ENCODE measurements at regions of chr5 and their contacts with region 1.

Region 1: DNA sequence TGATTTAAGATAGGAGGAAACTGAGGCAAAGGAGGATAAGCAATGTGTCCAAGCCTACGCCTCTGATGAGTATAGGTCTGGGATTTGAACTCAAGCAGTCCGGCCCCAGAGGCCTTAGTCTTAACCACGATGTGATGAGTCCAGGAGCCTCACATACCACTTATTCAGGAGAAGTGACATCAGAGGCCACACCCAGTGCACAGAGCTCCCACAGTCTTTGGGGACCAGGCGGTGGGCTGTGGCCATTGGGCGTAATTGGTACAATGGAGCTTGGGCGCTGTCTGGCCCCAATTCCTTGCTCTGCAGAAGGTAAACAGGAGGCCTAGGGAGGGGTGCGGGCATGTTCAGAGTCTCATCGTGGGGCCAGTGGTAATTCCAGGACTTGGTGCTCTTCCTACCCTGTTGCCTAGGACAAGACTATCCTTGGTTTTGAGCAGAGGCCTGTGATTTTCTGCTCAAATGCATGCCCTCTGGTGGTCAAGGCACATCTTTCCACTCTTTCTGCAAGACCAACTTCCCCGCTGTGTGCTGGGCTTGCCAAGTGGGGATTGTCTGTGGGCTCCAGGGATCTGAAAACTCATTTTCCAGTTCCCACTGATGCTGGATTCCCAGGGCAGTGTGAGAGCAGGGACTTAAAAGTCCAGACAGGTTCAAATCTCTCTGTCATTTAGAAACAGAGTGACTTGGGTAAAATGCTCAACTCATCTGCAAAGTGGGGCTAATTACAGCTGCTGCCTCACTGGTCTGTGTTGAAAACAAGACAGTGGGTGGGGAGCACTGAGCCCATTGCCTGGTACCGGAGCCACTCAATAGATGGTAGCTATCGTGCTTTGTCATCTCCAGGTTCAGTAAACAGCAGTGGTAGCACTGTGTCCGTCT is 15.8 kb downstream of the NDST1 start:
- DNase-seq: peak; percentile 69
- H3K4me3 ChIP-seq: no peak overlapping the region
- H3K27ac ChIP-seq: no peak overlapping the region
- H3K4me1 ChIP-seq: no peaks in the 10 kb centered on the region
- H3K27me3 ChIP-seq: no peaks in the 10 kb centered on the region
- CTCF ChIP-seq: peak; percentile 67 to 80
- POLR2A ChIP-seq: no peak

Region 2: DNA sequence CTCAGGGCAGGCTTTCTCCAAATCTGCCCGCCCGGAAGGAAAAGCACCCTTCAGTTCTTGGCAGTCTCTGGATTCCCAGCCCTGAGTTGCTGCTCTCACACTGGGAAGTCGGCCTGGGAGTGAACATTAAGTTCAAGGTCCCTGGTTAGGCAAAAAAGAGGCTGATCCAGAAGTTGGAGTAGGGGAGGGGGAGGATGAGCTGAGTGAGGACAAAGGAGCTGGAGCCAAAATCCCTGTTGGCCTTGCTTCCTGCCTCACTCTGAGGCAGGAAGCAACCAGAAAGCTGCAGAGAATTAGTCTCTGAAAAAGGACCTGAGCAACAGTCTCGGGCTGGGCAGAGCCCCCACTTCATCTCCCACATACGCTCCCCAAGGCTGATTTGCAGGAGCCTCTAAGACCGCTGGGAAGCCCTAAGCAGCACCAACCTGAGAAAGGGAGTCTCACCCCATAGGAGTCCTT is 59.1 kb before region 1 on chr5:
- CTCF ChIA-PET with region 1: interaction called, 78 read pairs
- POLR2A ChIA-PET with region 1: no interaction called
- dilution Hi-C with region 1: no loop called
- intact Hi-C with region 1: loop called (anchors 1 kb)
- DNase-seq: peak; percentile 28
- H3K4me3 ChIP-seq: no peak overlapping the region
- H3K27ac ChIP-seq: no peak overlapping the region
- H3K4me1 ChIP-seq: peaks cover 21% of the 10 kb centered on the region
- H3K27me3 ChIP-seq: no peaks in the 10 kb centered on the region
- CTCF ChIP-seq: no peak
- POLR2A ChIP-seq: no peak

Region 3: DNA sequence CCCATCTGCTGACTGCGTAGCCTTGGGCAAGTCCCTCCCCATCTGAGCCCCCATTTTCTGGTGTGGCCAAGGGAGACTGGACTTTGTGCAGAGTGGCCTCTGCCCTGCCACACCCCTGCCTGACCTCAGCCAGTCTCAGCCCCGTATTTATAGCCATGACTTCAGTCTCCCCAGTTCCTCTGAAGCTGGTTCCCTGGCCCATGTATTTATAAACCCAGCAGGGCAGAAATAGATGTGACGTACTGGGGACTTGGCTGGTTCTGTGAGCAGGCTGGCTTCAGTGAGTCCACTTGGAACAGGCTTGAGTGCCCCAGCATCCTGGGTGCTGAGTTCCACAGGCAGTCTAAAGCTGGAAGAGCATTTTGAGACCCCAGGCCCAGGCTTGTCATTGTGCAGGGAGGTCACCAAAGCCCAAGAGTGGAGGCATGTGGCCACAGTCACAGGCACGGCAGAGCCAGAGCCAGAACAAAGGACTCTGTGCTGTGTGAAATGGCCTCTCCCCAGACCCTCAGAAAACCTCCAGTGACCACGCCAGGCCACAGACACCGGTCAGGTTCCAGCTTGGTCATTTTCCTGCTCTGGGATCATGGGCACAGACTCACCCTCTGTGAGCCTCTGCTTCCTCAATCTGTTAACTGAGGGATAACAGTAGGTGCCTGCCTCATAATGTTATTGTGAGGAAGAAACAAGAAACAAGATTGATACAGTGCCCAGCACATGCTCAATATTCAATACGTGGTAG is 86.3 kb after region 1 on chr5:
- CTCF ChIA-PET with region 1: no interaction called
- POLR2A ChIA-PET with region 1: no interaction called
- dilution Hi-C with region 1: no loop called
- intact Hi-C with region 1: no loop called
- DNase-seq: no peak
- H3K4me3 ChIP-seq: no peak overlapping the region
- H3K27ac ChIP-seq: no peak overlapping the region
- H3K4me1 ChIP-seq: peaks cover 19% of the 10 kb centered on the region
- H3K27me3 ChIP-seq: no peaks in the 10 kb centered on the region
- CTCF ChIP-seq: no peak
- POLR2A ChIP-seq: no peak